Activated CD4-positive, alpha-beta T cell treated with anti-CD3 and anti-CD28 coated beads, Interleukin-2, amount 10 ng/mL, durations not matched to agents 24 days and 14 days (primary cell): ENCODE measurements at regions of chr19 and their contacts with region 1.

Region 1: GRCh38 chr19:51393959-51394836 is 3.8 kb upstream of the C19orf84 start:
- DNase-seq: peak; percentile 98
- H3K4me3 Mint-ChIP-seq: peak overlapping the region; percentile 94
- H3K27ac Mint-ChIP-seq: peak overlapping the region; percentile 96
- H3K4me1 Mint-ChIP-seq: peaks cover 52% of the 10 kb centered on the region
- H3K27me3 Mint-ChIP-seq: no peaks in the 10 kb centered on the region

Region 2: GRCh38 chr19:51108066-51108804 is 286.0 kb before region 1 on chr19 and contains the start of gene CTU1:
- intact Hi-C with region 1: loop called (anchors 2 kb)
- DNase-seq: peak; percentile 99
- H3K4me3 Mint-ChIP-seq: peak within 1 kb of the TSS; percentile 87
- H3K27ac Mint-ChIP-seq: peak within 1 kb of the TSS; percentile 93
- H3K4me1 Mint-ChIP-seq: peaks cover 24% of the 10 kb centered on the region
- H3K27me3 Mint-ChIP-seq: no peaks in the 10 kb centered on the region
- total RNA-seq, gene CTU1: 12.8 and 13.4 TPM in 2 replicates

Region 3: GRCh38 chr19:51338563-51339312 is 55.5 kb before region 1 on chr19:
- intact Hi-C with region 1: loop called (anchors 1 kb)
- DNase-seq: peak; percentile 95
- H3K4me3 Mint-ChIP-seq: peak overlapping the region; percentile 90
- H3K27ac Mint-ChIP-seq: peak overlapping the region; percentile 87
- H3K4me1 Mint-ChIP-seq: peaks cover 20% of the 10 kb centered on the region
- H3K27me3 Mint-ChIP-seq: peaks cover 6% of the 10 kb centered on the region

Region 4: GRCh38 chr19:51372649-51373504 is 21.3 kb before region 1 on chr19 and contains the start of gene NKG7:
- intact Hi-C with region 1: loop called (anchors 1 kb)
- DNase-seq: peak; percentile 90
- H3K4me3 Mint-ChIP-seq: peak within 1 kb of the TSS; percentile 98
- H3K27ac Mint-ChIP-seq: peak within 1 kb of the TSS; percentile 98
- H3K4me1 Mint-ChIP-seq: peaks cover 70% of the 10 kb centered on the region
- H3K27me3 Mint-ChIP-seq: no peaks in the 10 kb centered on the region
- total RNA-seq, gene NKG7: 363 and 379 TPM in 2 replicates

Region 5: GRCh38 chr19:51441410-51442390 is 47.5 kb after region 1 on chr19:
- intact Hi-C with region 1: loop called (anchors 1 kb)
- DNase-seq: peak; percentile 95
- H3K4me3 Mint-ChIP-seq: peak overlapping the region; percentile 80
- H3K27ac Mint-ChIP-seq: peak overlapping the region; percentile 94
- H3K4me1 Mint-ChIP-seq: peaks cover 52% of the 10 kb centered on the region
- H3K27me3 Mint-ChIP-seq: peaks cover 12% of the 10 kb centered on the region

Region 6: GRCh38 chr19:51660975-51661600 is 266.9 kb after region 1 on chr19:
- intact Hi-C with region 1: loop called (anchors 2 kb)
- DNase-seq: peak; percentile 84
- H3K4me3 Mint-ChIP-seq: no peak overlapping the region
- H3K27ac Mint-ChIP-seq: no peak overlapping the region
- H3K4me1 Mint-ChIP-seq: peaks cover 5% of the 10 kb centered on the region
- H3K27me3 Mint-ChIP-seq: peaks cover 23% of the 10 kb centered on the region